Activated CD4-positive, alpha-beta T cell treated with anti-CD3 and anti-CD28 coated beads for 36 hours (primary cell): ENCODE measurements at regions of chr4 and their contacts with region 1.

Region 1: DNA sequence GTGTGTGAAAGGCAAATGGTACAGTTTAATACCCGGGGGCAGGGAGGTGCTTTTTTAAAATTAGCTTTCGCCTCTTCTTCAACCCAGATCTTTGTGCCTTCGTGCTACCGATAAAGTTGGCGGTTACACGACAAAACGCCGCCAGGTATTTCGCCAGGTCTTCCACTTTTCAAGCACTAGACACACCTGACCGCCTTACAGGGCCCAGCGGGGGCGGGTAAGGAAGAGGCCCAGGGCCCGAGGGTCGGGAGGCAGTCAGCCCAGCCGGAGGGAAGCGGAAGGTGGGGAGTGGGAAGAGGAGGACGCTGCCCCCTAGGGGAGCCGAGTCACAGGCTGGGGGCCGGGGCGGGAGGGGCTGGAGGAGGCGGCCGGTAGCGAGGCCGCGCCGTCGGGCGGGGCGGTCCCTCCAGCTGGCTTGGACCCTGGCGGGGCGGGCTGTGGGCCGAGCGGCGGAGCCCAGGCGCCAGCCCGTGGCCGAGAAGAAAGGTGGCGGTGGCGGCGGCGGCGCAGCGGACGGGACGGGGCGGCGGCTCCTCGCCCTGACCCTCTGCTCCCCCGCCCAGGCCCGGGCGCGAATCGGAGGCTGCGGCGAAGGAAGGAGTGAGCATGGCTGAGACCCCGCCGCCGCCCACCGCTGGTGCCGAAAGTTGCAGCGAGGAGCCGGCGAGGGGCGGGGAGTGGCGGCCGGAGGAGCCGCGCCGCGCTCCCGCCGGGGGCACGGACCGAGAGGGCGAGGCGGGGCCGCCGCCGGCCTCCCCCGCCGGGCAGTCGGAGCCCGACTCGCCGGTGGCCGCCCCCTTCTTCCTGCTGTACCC is 16.2 kb downstream of the UTP3 start:
- DNase-seq: peak; percentile 76
- ATAC-seq: peak; percentile 37
- H3K4me3 Mint-ChIP-seq: peak overlapping the region; percentile 90
- H3K27ac Mint-ChIP-seq: peak overlapping the region; percentile 90
- H3K4me1 Mint-ChIP-seq: peaks cover 23% of the 10 kb centered on the region
- H3K27me3 Mint-ChIP-seq: no peaks in the 10 kb centered on the region

Region 2: GRCh38 chr4:70586841-70587240 is 117.7 kb before region 1 on chr4:
- CTCF ChIA-PET with region 1: no interaction called
- POLR2A ChIA-PET with region 1: no interaction called
- intact Hi-C with region 1: no loop called
- DNase-seq: no peak
- ATAC-seq: no peak
- H3K4me3 Mint-ChIP-seq: no peak overlapping the region
- H3K27ac Mint-ChIP-seq: no peak overlapping the region
- H3K4me1 Mint-ChIP-seq: no peaks in the 10 kb centered on the region
- H3K27me3 Mint-ChIP-seq: peaks cover 3% of the 10 kb centered on the region

Region 3: DNA sequence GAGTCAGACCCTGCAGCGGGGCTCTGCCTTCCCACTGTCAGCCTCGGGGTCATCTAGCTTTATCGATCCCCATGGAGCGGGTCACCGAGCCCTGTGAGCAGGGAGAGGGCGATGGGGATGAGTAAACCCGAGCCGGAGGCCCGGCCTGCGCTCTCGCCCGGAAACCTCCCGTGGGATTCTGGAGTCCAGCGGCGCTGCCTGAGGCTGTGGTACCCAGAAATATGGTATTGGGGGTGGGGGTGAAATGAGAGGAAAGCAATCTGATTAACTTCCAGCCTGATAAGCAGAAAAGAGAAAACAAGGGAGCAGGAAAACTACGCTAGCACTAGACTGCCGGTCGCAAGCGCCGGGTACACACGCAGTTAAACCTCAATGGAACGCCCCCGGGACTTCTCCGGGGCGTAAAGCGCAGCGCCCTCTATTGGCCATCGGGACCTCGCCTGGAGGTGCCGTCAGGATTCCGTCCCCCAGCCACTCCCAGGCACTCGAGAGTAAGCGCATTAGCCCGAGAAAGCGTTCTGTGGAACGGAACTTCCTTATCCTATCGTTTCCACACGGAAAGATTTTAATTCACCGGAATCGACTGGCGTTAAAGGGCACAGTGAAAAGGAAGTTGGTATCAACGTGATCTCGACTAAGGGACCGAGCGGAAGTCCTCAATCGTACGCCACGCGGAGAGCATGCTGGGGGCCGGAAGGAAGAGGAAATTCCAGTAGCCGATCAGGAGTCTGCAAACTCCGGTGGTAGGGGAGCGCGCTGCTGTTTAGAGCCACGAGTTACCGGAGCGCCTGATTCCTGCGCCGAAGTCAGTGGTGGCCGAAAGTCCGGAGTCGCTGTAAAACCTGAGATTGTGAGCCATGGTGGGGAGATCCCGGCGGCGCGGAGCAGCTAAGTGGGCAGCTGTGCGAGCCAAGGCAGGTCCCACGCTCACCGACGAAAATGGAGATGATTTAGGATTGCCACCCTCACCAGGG is 16.4 kb before region 1 on chr4 and contains the start of gene UTP3:
- CTCF ChIA-PET with region 1: interaction called, 23 read pairs
- POLR2A ChIA-PET with region 1: interaction called, 4 read pairs
- intact Hi-C with region 1: loop called (anchors 1 kb)
- DNase-seq: peak; percentile 97
- ATAC-seq: peak; percentile 92
- H3K4me3 Mint-ChIP-seq: peak within 1 kb of the TSS; percentile 96
- H3K27ac Mint-ChIP-seq: peak within 1 kb of the TSS; percentile 99
- H3K4me1 Mint-ChIP-seq: peaks cover 31% of the 10 kb centered on the region
- H3K27me3 Mint-ChIP-seq: no peaks in the 10 kb centered on the region
- total RNA-seq, gene UTP3: 32.6 to 34.3 TPM

Region 4: GRCh38 chr4:70734168-70734954 is 29.8 kb after region 1 on chr4:
- CTCF ChIA-PET with region 1: interaction called, 10 read pairs
- POLR2A ChIA-PET with region 1: no interaction called
- intact Hi-C with region 1: loop called (anchors 1 to 2 kb)
- DNase-seq: peak; percentile 39
- ATAC-seq: peak; percentile 92
- H3K4me3 Mint-ChIP-seq: peak overlapping the region; percentile 52
- H3K27ac Mint-ChIP-seq: peak overlapping the region; percentile 74
- H3K4me1 Mint-ChIP-seq: peaks cover 36% of the 10 kb centered on the region
- H3K27me3 Mint-ChIP-seq: no peaks in the 10 kb centered on the region

Region 5: DNA sequence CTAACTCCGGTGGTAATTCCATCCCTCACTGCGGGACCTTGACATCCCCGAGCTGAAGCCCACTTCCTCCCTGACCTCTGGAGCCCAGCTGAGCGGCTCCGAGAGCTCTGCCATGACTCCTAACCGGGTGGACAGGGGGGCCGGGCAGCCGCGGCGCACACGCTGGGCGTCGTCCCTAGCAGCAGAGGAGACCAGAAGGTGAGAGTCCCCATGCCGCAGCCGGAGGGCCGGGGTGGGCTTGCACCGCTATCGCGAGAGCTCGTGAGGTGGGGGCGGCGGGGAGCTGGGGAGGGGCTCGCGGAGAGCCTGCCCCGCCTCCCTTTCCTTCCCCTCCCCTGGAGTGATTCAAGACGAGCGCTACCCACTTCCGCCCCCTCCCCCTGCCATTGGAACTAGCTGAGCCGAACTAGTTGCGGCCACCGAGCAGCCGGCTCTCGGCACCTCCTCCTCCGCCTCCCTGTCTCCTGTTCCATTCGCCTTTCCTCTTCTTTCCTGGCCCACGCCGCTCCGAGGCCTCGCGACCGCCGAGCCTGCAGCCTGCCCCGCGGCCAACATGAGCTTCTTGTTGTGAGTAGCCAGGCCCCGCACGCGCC is 197.5 kb after region 1 on chr4 and contains the start of gene MOB1B:
- CTCF ChIA-PET with region 1: no interaction called
- POLR2A ChIA-PET with region 1: no interaction called
- intact Hi-C with region 1: loop called in 1 of 2 experiments (anchors 1 kb)
- DNase-seq: peak; percentile 94
- ATAC-seq: peak; percentile 96
- H3K4me3 Mint-ChIP-seq: peak within 1 kb of the TSS; percentile 96
- H3K27ac Mint-ChIP-seq: peak within 1 kb of the TSS; percentile 89
- H3K4me1 Mint-ChIP-seq: peaks cover 27% of the 10 kb centered on the region
- H3K27me3 Mint-ChIP-seq: no peaks in the 10 kb centered on the region
- total RNA-seq, gene MOB1B: 18.5 to 21.9 TPM

Region 6: GRCh38 chr4:71004281-71004851 is 299.8 kb after region 1 on chr4:
- CTCF ChIA-PET with region 1: no interaction called
- POLR2A ChIA-PET with region 1: no interaction called
- intact Hi-C with region 1: loop called (anchors 2 to 5 kb)
- DNase-seq: peak; percentile 79
- ATAC-seq: peak; percentile 48
- H3K4me3 Mint-ChIP-seq: peak overlapping the region; percentile 21
- H3K27ac Mint-ChIP-seq: peak overlapping the region; percentile 81
- H3K4me1 Mint-ChIP-seq: peaks cover 84% of the 10 kb centered on the region
- H3K27me3 Mint-ChIP-seq: no peaks in the 10 kb centered on the region

Region 7: DNA sequence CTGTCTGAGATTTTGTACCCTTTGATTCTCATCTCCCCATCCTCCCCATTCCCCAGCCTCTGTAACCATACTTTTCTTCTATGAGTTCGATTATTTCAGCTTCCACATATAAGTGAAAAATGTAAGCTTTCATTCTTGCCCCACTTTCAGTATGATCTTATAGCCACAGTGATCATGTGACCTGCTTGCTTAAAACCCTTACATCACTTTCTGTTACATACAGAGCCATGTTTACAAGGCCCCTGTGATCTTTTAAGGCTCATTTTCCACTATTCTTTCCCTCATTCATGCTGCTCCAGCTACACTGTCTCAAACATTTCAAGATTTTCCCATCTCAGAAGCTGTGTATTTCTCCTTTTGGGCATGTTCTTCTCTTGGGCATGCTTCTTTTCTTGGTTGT is 436.6 kb after region 1 on chr4:
- CTCF ChIA-PET with region 1: no interaction called
- POLR2A ChIA-PET with region 1: no interaction called
- intact Hi-C with region 1: no loop called
- DNase-seq: no peak
- ATAC-seq: peak; percentile 42
- H3K4me3 Mint-ChIP-seq: no peak overlapping the region
- H3K27ac Mint-ChIP-seq: no peak overlapping the region
- H3K4me1 Mint-ChIP-seq: peaks cover 3% of the 10 kb centered on the region
- H3K27me3 Mint-ChIP-seq: peaks cover 2% of the 10 kb centered on the region

Region 8: GRCh38 chr4:71526626-71527406 is 822.3 kb after region 1 on chr4:
- CTCF ChIA-PET with region 1: no interaction called
- POLR2A ChIA-PET with region 1: no interaction called
- intact Hi-C with region 1: no loop called
- DNase-seq: no peak
- ATAC-seq: no peak
- H3K4me3 Mint-ChIP-seq: no peak overlapping the region
- H3K27ac Mint-ChIP-seq: no peak overlapping the region
- H3K4me1 Mint-ChIP-seq: no peaks in the 10 kb centered on the region
- H3K27me3 Mint-ChIP-seq: peaks cover 1% of the 10 kb centered on the region